WTC11 (cell line): ENCODE measurements at regions of chr9 and their contacts with region 1.

Region 1: GRCh38 chr9:95103385-95103784 is 214.1 kb downstream of the FANCC start:
- DNase-seq: peak; percentile 39
- ATAC-seq: peak; percentile 75
- H3K4me3 Mint-ChIP-seq: no peak overlapping the region
- H3K27ac Mint-ChIP-seq: peak overlapping the region; percentile 43
- H3K4me1 Mint-ChIP-seq: peaks cover 14% of the 10 kb centered on the region
- H3K27me3 Mint-ChIP-seq: no peaks in the 10 kb centered on the region
- CTCF ChIP-seq: no peak

Region 2: GRCh38 chr9:95078958-95079357 is 24.4 kb before region 1 on chr9:
- CTCF ChIA-PET with region 1: no interaction called
- POLR2A ChIA-PET with region 1: no interaction called
- DNase-seq: peak; percentile 44
- ATAC-seq: peak; percentile 87
- H3K4me3 Mint-ChIP-seq: no peak overlapping the region
- H3K27ac Mint-ChIP-seq: 0 out of 2 replicates have a peak overlapping the region, but pooled peaks have one; percentile 46
- H3K4me1 Mint-ChIP-seq: peaks cover 27% of the 10 kb centered on the region
- H3K27me3 Mint-ChIP-seq: no peaks in the 10 kb centered on the region
- CTCF ChIP-seq: no peak

Region 3: DNA sequence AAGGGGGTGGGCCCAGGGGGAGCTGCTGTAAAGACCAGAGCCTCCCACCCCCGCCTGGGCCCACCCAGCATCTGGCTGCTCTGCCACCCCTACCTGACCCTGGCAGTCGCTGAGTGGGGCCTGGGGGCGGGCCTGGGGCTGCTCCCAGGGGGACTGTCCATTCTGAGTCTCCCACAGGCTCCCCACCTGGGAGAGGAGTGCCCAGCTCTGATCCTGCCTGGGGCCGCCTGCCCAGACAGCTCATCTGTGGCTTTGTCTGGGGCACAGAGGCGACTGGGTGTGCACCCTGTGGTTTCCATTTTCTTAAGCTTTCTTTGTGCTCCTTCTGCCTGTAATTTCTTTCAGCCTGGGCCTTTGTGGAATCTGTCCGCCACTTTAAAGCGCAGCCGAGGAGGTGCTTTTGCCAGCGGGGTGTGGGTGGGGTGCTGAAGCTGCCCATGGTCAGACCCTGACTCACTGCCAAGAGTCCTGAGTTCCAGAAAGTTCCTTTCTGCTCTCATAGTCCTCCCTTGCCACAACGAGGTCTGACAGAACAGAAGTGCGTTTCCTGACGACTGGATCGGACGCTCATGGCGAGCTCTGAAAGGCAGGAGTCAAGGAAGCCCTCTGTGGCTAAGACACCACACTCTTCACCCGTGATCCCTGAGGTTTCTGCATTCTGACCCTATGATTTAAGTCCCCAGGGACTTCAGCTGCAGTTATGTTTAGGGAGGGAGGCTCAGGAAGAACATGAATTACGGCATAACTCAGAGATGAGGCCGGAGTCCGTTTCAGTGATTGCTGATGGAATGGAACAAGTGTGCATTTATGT is 10.9 kb before region 1 on chr9:
- CTCF ChIA-PET with region 1: interaction called, 17 read pairs
- POLR2A ChIA-PET with region 1: no interaction called
- DNase-seq: no peak
- ATAC-seq: peak; percentile 43
- H3K4me3 Mint-ChIP-seq: no peak overlapping the region
- H3K27ac Mint-ChIP-seq: peak overlapping the region; percentile 25
- H3K4me1 Mint-ChIP-seq: peaks cover 41% of the 10 kb centered on the region
- H3K27me3 Mint-ChIP-seq: no peaks in the 10 kb centered on the region
- CTCF ChIP-seq: no peak

Region 4: GRCh38 chr9:95116003-95116807 is 12.8 kb after region 1 on chr9:
- CTCF ChIA-PET with region 1: interaction called, 17 read pairs
- POLR2A ChIA-PET with region 1: interaction called, 3 read pairs
- DNase-seq: no peak
- ATAC-seq: peak; percentile 83
- H3K4me3 Mint-ChIP-seq: no peak overlapping the region
- H3K27ac Mint-ChIP-seq: no peak overlapping the region
- H3K4me1 Mint-ChIP-seq: peaks cover 10% of the 10 kb centered on the region
- H3K27me3 Mint-ChIP-seq: no peaks in the 10 kb centered on the region
- CTCF ChIP-seq: no peak